Aorta (tissue), 5 donors: ENCODE measurements at regions of chr1 and their contacts with region 1.

Region 1: DNA sequence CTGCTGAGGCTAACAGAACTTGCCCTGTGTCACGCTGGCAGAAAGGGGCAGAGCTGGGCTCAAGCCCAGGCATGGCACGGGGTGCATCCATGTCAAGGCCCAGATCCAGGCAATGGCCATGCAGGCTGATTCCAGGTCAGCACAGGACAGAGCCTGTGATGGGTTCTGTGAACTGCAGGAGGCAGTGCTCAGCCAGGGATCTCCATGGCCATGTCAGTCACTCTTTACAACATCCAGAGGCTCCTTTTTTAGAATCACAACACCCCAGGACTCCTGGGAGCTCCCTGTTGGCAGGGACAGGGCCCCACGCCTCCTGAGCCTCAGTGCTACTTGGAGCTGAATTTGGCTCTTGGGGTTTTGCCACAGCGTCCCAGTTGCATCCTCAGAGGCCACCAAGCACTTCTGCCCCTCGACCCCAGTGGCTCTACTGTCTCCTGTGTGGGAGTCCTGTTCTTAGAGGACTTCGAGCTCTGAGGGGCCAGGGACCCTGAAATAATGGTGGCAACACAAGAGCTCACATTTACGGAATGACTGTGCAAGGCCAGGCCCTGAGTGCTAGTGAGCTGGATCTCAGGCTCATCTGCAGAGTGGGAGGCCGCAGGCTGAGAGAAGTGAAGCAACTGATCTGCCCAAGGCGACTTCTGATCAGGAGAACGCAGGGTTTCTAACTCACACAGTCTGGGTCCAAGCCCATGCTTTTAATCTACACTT is 211.5 kb downstream of the TRABD2B start:
- DNase-seq: peak; percentile 58 to 82
- ATAC-seq: peak; percentile 82
- H3K4me3 ChIP-seq: no peak overlapping the region
- H3K27ac ChIP-seq: peak overlapping the region in 1 of 2 donors; percentile 73
- H3K4me1 ChIP-seq: peaks cover 0 to 2% of the 10 kb centered on the region in 2 donors
- H3K27me3 ChIP-seq: no peaks in the 10 kb centered on the region

Region 2: GRCh38 chr1:47894713-47895537 is 109.2 kb after region 1 on chr1:
- intact Hi-C with region 1: loop called in 1 of 2 experiments (anchors 5 kb)
- DNase-seq: no peak
- ATAC-seq: no peak
- H3K4me3 ChIP-seq: no peak overlapping the region
- H3K27ac ChIP-seq: no peak overlapping the region
- H3K4me1 ChIP-seq: no peaks in the 10 kb centered on the region
- H3K27me3 ChIP-seq: no peaks in the 10 kb centered on the region

Region 3: DNA sequence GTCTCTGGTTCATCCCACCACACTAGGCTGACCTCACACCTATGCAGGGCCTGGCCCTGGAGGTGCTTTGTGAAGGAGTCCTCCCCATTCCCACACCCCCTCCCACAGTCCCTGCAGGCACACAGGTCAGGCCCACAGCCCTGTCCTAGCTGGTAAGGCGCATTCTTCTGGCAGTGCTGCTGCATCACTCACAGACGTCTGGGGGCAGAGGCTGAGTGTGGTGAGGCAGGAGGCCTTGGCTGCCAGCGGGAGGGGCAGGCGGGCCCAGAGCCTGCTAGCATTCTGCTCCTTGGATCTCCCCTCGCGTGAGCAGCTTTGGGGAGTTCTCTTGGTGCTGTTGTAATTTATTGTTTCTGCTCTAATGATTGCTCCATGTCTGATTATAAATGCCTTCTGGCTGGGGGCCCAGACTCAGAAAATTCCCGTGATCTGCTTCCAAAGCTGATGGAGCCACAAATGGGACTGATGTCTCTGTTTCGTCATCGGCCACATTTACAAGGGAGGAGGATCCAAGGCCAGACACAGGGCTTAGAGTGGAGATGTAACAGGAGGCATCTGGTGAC is 148.6 kb after region 1 on chr1:
- intact Hi-C with region 1: loop called (anchors 5 kb)
- DNase-seq: peak; percentile 77 to 90
- ATAC-seq: peak; percentile 88
- H3K4me3 ChIP-seq: no peak overlapping the region
- H3K27ac ChIP-seq: no peak overlapping the region
- H3K4me1 ChIP-seq: no peaks in the 10 kb centered on the region
- H3K27me3 ChIP-seq: no peaks in the 10 kb centered on the region